Dorsolateral prefrontal cortex (tissue), 120 donors: ENCODE measurements at regions of chr17 and their contacts with region 1.

Region 1: DNA sequence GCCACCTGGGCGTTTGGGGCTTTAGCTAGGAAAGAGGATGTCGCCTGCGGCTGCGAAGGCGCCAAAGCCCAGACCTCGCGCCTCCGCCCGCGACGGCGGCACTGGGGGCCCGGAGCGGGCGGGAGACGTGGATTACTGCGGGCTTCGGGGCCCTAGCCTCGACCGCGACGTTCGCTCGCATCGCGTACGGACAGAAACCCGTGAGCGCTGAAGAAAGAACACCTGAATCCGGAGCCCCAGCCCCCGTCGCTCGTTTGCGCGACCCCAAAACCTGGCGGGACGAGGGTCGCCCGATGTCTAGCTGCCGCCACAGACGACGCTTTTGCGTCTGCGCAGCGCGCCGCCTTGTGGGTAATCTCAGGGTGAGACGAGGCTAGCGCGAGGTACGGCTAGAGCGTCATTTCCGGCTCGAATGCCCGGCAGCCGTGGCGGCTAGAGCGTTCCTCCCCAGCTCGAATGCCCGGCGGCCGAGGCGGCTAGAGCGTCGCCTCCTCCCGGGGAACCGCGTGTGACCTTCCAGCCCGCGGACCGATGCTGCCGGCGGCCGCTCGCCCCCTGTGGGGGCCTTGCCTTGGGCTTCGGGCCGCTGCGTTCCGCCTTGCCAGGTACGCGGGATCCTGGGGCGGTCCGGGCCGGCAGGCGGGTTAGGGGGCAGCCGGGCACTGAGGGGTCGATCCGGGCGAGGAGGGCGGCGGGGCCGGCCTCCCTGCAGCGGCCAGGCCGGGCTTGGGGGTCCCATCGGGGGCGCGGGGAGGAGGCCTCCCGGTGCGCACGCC is at the start of gene MRPL12:
- DNase-seq: peak; percentile 92 to 98 (median 96)
- H3K4me3 ChIP-seq: peak within 1 kb of the TSS; percentile 61 to 99 (median 95)
- H3K27ac ChIP-seq: peak within 1 kb of the TSS; percentile 18 to 98 (median 89)
- H3K27me3 ChIP-seq: no peaks in the 10 kb centered on the region
- CTCF ChIP-seq: peak in 51 of 56 donors; percentile 13 to 70 (median 48)
- total RNA-seq, gene MRPL12: 25.2 to 52.1 (median 36.6) TPM

Region 2: GRCh38 chr17:81484195-81484979 is 218.8 kb before region 1 on chr17:
- intact Hi-C with region 1: no loop called
- DNase-seq: peak; percentile 71 to 93 (median 88)
- H3K4me3 ChIP-seq: peak overlapping the region; percentile 36 to 71 (median 61)
- H3K27ac ChIP-seq: peak overlapping the region in 33 of 59 donors; percentile 1 to 85 (median 51)
- H3K27me3 ChIP-seq: no peaks in the 10 kb centered on the region
- CTCF ChIP-seq: peak in 55 of 56 donors; percentile 81 to 100 (median 99)

Region 3: DNA sequence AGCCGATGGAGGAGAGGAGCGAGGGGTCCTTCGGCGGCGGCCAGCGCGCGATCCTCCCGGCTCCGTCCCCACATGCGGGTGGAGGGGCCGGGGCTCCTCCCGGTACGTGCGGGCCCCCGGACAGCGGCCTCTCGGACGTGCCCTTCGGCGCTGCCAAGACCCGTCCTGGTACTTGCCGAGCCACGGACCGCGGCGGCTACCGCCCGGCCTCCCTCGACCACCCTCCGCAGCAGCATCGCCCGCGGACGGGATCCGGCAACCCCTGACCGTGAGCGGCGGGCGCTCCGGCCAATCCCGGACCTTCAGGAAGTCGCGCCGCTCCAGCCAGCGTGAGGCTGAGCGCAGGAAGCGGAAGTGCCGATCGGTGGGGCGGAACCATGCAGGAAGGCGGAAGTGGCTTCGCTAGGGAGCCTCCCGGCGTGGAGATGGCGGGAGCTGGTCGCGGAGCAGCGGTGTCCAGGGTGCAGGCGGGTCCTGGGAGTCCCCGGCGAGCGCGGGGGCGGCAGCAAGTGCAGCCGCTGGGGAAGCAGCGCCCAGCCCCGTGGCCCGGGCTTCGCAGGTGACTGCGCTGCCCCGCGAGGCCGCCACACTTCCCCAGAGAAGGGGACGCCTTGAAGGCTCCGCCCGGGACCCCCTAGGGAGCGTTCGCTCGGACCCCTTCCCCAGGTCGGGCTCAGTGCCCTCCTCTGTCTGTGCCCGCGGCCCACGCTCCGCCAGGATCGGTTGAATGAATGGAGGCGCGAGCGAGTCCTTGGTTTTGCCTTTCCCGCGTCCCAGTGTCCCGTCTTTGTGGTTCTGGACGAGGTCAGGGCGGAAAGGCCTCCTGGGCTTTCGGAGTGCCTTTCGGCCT is 36.6 kb before region 1 on chr17 and contains the starts of genes CCDC137 and OXLD1:
- intact Hi-C with region 1: loop called in 1 of 2 experiments (anchors 5 kb)
- DNase-seq: peak; percentile 93 to 98 (median 96)
- H3K4me3 ChIP-seq: peak within 1 kb of the TSS; percentile 65 to 100 (median 96)
- H3K27ac ChIP-seq: peak within 1 kb of the TSS in 57 of 59 donors; percentile 5 to 92 (median 82)
- H3K27me3 ChIP-seq: no peaks in the 10 kb centered on the region
- CTCF ChIP-seq: peak in 17 of 56 donors; percentile 9 to 43 (median 24)
- total RNA-seq, gene CCDC137: 9.0 to 20.1 (median 13.5) TPM
- total RNA-seq, gene OXLD1: 14.1 to 35.0 (median 24.3) TPM

Region 4: DNA sequence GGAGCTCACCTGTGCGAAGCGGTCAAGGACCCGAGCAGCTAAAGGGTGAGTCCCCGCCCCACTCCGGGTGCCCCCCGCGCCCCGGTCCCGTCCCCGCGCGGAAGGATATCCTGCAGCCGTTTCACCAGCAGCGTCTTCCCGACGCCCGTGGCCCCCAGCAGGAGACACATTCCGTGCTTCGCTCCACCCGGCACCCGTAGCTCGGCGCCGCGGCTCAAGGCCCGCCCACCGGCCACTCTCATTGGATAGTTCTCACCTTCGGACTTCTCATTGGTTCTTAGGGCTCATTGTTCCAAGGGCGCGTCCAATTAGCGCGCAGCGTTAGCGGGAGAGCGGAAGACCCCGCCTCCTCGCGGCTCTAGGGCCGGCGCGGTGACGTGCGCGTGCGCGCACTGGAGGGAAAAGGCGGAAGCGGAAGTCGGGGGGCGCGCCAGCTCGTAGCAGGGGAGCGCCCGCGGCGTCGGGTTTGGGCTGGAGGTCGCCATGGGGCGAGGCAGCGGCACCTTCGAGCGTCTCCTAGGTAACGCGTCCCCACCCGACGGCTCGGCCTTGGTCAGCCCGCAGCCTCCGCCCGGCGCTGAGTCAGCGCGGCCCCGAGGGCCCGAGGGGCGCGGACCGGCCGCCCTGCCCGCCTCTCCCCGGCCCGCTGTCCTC is 19.4 kb before region 1 on chr17 and contains the starts of genes ARL16 and HGS:
- intact Hi-C with region 1: loop called (anchors 1 to 2 kb)
- DNase-seq: peak; percentile 95 to 99 (median 97)
- H3K4me3 ChIP-seq: peak within 1 kb of the TSS; percentile 63 to 100 (median 99)
- H3K27ac ChIP-seq: peak within 1 kb of the TSS in 58 of 59 donors; percentile 11 to 95 (median 84)
- H3K27me3 ChIP-seq: no peaks in the 10 kb centered on the region
- CTCF ChIP-seq: peak in 32 of 56 donors; percentile 7 to 57 (median 26)
- total RNA-seq, gene ARL16: 20.4 to 50.6 (median 36.9) TPM
- total RNA-seq, gene HGS: 84.6 to 142 (median 106) TPM

Region 5: DNA sequence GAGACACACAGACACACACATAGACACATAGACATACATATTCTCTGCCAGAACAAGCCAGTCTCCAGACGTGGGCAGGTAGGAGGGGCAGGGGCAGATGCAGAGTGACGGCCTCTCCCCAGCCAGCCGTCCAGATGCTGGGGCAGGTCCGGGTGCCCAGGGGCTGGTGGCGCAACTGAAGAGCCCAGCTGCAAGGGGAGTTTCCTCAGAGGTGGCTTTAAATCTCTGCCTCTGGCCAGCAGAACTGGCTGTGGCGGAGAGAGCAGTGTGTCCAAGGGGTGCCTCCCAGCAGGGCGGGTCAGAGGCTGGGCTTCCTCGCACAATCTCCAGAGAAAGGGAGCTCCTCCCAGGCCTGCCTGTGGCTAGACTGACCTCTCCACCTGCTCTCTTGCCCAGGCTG is 91.3 kb after region 1 on chr17:
- intact Hi-C with region 1: no loop called
- DNase-seq: no peak
- H3K4me3 ChIP-seq: no peak overlapping the region
- H3K27ac ChIP-seq: no peak overlapping the region
- H3K27me3 ChIP-seq: peaks cover 0 to 7% (median 0%) of the 10 kb centered on the region in 45 donors
- CTCF ChIP-seq: no peak

Region 6: GRCh38 chr17:81833160-81833920 is 130.2 kb after region 1 on chr17 and contains the start of gene MCRIP1:
- intact Hi-C with region 1: loop called in 1 of 2 experiments (anchors 5 kb)
- DNase-seq: peak; percentile 73 to 97 (median 86)
- H3K4me3 ChIP-seq: peak within 1 kb of the TSS; percentile 75 to 97 (median 92)
- H3K27ac ChIP-seq: peak within 1 kb of the TSS in 58 of 59 donors; percentile 6 to 95 (median 87)
- H3K27me3 ChIP-seq: no peaks in the 10 kb centered on the region
- CTCF ChIP-seq: peak in 1 of 56 donors; percentile 20
- total RNA-seq, gene MCRIP1: 102 to 185 (median 136) TPM